ENCODE measurements at regions of chr17 and their contacts with region 1.

Region 1: GRCh38 chr17:5587438-5588032 is 3.2 kb upstream of the NLRP1 start:
- H3K4me3 ChIP-seq: no peak overlapping the region
- H3K27ac ChIP-seq: no peak overlapping the region
- H3K4me1 ChIP-seq: peaks cover 5% of the 10 kb centered on the region; the same call in 1 of the 2 replicates
- CTCF ChIP-seq: peak; percentile 67; the same call in 1 of the 2 replicates

Region 2: GRCh38 chr17:5619088-5619740 is 31.7 kb after region 1 on chr17:
- CTCF ChIA-PET with region 1: interaction called, 14 read pairs
- POLR2A ChIA-PET with region 1: no interaction called
- H3K4me3 ChIP-seq: no peak overlapping the region
- H3K27ac ChIP-seq: no peak overlapping the region
- H3K4me1 ChIP-seq: no peaks in the 10 kb centered on the region
- CTCF ChIP-seq: no peak

Region 3: DNA sequence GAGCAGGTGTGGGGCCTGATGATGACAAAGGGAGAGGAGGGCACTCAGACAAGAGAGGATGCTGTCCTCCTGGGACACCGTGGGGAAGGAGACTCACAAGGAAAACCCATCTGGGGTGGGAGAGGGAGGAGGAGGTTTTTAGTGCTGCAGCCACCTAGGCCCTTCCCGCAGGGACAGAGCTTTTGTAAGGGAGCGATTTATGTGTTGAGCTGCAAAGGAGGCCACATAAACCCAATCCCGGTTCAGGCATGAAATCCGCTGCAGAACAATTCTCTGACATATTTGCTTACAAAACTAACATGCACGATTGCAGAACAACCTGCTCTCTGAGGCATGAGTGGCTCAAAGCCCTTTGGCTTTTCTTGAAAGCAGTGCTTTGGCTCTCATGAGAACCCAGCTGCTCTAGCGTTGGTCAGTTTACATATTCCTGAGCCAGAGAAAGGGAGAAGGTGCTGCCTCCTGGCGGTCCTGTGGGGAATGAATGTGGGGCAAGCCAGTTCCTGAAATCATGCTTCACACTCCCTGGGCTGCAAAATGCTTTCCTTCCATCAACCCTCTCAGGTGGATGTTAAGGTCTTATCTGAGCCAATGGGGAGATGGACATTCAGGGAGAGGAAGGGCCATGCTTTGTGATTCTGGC is 119.2 kb after region 1 on chr17:
- CTCF ChIA-PET with region 1: interaction called, 51 read pairs
- POLR2A ChIA-PET with region 1: no interaction called
- H3K4me3 ChIP-seq: no peak overlapping the region
- H3K27ac ChIP-seq: no peak overlapping the region
- H3K4me1 ChIP-seq: no peaks in the 10 kb centered on the region
- CTCF ChIP-seq: peak; percentile 54

Region 4: DNA sequence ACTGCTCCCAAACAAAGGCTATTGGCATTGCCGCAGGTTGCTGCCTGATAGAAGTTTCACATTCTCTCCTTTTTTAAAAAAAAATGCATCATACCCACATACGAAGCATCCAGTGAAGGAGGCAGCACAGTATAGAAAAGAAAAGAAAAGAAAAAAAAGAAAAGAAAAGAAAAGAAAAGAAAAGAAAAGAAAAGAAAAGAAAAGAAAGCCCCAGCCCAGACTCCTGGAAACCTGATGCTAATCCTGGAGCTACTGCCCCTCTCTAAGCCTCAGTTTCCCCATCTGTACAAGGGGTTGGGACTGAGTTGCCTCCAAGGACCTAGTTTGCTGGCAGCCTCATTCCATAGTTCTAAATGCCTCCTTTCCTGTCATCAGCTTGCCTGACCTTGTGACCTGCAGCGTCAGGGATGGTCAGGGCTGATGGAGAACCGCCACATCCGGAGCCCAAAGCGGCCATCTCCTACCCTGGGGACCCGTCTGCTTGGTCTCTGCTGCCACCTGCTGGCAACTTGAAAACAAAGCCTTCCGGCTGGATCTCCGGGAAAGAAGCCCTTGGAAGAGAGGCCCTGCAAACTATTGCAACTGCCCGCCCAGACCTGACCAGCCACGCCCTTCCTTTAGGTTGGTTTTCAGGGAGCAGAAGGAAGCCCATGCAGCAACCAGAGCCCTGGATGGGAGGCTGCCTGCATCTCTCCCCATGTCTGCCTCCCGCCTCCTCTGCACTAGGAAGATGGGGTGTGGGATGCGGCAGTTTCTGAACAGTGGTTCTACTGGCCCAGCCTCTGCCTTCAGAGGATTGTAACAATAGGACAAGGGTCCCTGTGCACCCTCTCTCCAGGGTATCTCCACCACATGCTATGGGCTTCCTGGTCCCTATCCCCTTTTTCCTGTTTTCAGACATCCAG is 834.4 kb after region 1 on chr17:
- CTCF ChIA-PET with region 1: interaction called, 28 read pairs
- POLR2A ChIA-PET with region 1: no interaction called
- H3K4me3 ChIP-seq: no peak overlapping the region
- H3K27ac ChIP-seq: no peak overlapping the region
- H3K4me1 ChIP-seq: no peaks in the 10 kb centered on the region
- CTCF ChIP-seq: peak; percentile 82

Measured in HEK293 (cell line).